CD8-positive, alpha-beta T cell (primary cell): ENCODE measurements at regions of chr17 and their contacts with region 1.

Region 1: GRCh38 chr17:80737106-80738019 is 192.7 kb downstream of the RPTOR start:
- DNase-seq: no peak
- ATAC-seq: no peak
- H3K4me3 ChIP-seq: no peak overlapping the region
- H3K4me3 Mint-ChIP-seq: no peak overlapping the region
- H3K27ac ChIP-seq: no peak overlapping the region
- H3K27ac Mint-ChIP-seq: peak overlapping the region; percentile 95
- H3K4me1 ChIP-seq: peaks cover 48% of the 10 kb centered on the region
- H3K4me1 Mint-ChIP-seq: peaks cover 59% of the 10 kb centered on the region
- H3K27me3 ChIP-seq: no peaks in the 10 kb centered on the region
- H3K27me3 Mint-ChIP-seq: no peaks in the 10 kb centered on the region
- CTCF ChIP-seq: no peak

Region 2: GRCh38 chr17:80704381-80704819 is 33.0 kb before region 1 on chr17:
- CTCF ChIA-PET with region 1: interaction called, 4 read pairs
- POLR2A ChIA-PET with region 1: no interaction called
- intact Hi-C with region 1: loop called in 1 of 2 experiments (anchors 5 kb)
- DNase-seq: no peak
- ATAC-seq: peak; percentile 14
- H3K4me3 ChIP-seq: no peak overlapping the region
- H3K4me3 Mint-ChIP-seq: no peak overlapping the region
- H3K27ac ChIP-seq: peak overlapping the region in 1 of 2 experiments; percentile 63
- H3K27ac Mint-ChIP-seq: peak overlapping the region; percentile 95
- H3K4me1 ChIP-seq: peaks cover 46% of the 10 kb centered on the region
- H3K4me1 Mint-ChIP-seq: peaks cover 78% of the 10 kb centered on the region
- H3K27me3 ChIP-seq: no peaks in the 10 kb centered on the region
- H3K27me3 Mint-ChIP-seq: no peaks in the 10 kb centered on the region
- CTCF ChIP-seq: no peak

Region 3: GRCh38 chr17:80773243-80773991 is 36.1 kb after region 1 on chr17:
- CTCF ChIA-PET with region 1: interaction called, 3 read pairs
- POLR2A ChIA-PET with region 1: interaction called, 5 read pairs
- intact Hi-C with region 1: loop called (anchors 5 kb)
- DNase-seq: peak in 2 of 9 experiments; percentile 56 to 59
- ATAC-seq: peak; percentile 81
- H3K4me3 ChIP-seq: no peak overlapping the region
- H3K4me3 Mint-ChIP-seq: peak overlapping the region; percentile 75
- H3K27ac ChIP-seq: no peak overlapping the region
- H3K27ac Mint-ChIP-seq: peak overlapping the region; percentile 95
- H3K4me1 ChIP-seq: peaks cover 31% of the 10 kb centered on the region
- H3K4me1 Mint-ChIP-seq: peaks cover 61% of the 10 kb centered on the region
- H3K27me3 ChIP-seq: no peaks in the 10 kb centered on the region
- H3K27me3 Mint-ChIP-seq: no peaks in the 10 kb centered on the region
- CTCF ChIP-seq: no peak